HepG2 (cell line): ENCODE measurements at regions of chr6 and their contacts with region 1.

Region 1: DNA sequence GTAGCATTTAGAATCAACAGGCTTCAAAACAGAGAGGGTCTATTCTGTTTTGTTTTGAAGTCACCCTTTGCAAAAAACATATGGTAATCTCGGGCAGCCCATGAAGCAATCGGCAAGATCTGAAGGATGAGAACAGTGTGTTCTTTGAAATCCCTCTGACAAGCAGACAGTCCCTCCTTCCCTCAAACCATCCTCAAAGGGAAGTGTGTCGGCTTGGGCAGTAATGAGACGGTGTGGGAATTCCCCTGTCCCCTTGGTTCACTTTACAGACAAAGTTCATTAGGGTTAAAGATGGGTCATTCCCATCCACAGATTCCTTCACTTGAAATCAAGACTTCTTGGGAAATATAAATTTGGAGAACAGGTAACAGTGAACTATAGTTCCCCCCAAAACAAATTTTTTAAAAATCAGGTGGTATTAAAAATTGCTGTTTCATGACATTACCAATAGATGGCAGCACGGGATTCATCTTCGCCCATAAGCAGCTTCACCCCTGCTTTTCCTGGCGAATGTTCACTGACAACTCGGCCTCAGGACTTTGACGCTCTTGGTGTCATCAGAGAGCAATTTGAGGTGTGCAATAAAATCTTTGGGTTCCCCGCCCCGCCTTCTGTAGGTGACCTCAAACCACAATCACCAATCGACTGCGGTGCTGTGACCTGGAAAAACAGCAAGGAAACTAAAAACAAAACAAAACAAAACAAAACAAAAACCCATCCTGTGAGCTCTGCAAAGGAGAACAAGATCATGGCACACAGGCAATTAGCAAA is 159.3 kb upstream of the TNFAIP3 start:
- DNase-seq: peak; percentile 99
- ATAC-seq: peak; percentile 87
- H3K4me3 ChIP-seq: no peak overlapping the region
- H3K27ac ChIP-seq: peak overlapping the region; percentile 62
- H3K4me1 ChIP-seq: peaks cover 80% of the 10 kb centered on the region
- H3K27me3 ChIP-seq: no peaks in the 10 kb centered on the region
- CTCF ChIP-seq: peak; percentile 91
- EP300 ChIP-seq: peak; percentile 89 to 97; a peak in 3 of 4 replicates
- POLR2A ChIP-seq: no peak
- RAD21 ChIP-seq: peak; percentile 98

Region 2: GRCh38 chr6:137351890-137352289 is 355.9 kb before region 1 on chr6:
- CTCF ChIA-PET with region 1: no interaction called
- POLR2A ChIA-PET with region 1: no interaction called
- in situ Hi-C with region 1: no loop called
- intact Hi-C with region 1: loop called (anchors 10 kb)
- DNase-seq: peak; percentile 86
- ATAC-seq: no peak
- H3K4me3 ChIP-seq: no peak overlapping the region
- H3K27ac ChIP-seq: peak overlapping the region; percentile 99
- H3K4me1 ChIP-seq: peaks cover 82% of the 10 kb centered on the region
- H3K27me3 ChIP-seq: no peaks in the 10 kb centered on the region
- CTCF ChIP-seq: no peak
- EP300 ChIP-seq: peak in 1 of 2 experiments; percentile 76; a peak in 2 of 4 replicates
- POLR2A ChIP-seq: no peak
- RAD21 ChIP-seq: no peak

Region 3: DNA sequence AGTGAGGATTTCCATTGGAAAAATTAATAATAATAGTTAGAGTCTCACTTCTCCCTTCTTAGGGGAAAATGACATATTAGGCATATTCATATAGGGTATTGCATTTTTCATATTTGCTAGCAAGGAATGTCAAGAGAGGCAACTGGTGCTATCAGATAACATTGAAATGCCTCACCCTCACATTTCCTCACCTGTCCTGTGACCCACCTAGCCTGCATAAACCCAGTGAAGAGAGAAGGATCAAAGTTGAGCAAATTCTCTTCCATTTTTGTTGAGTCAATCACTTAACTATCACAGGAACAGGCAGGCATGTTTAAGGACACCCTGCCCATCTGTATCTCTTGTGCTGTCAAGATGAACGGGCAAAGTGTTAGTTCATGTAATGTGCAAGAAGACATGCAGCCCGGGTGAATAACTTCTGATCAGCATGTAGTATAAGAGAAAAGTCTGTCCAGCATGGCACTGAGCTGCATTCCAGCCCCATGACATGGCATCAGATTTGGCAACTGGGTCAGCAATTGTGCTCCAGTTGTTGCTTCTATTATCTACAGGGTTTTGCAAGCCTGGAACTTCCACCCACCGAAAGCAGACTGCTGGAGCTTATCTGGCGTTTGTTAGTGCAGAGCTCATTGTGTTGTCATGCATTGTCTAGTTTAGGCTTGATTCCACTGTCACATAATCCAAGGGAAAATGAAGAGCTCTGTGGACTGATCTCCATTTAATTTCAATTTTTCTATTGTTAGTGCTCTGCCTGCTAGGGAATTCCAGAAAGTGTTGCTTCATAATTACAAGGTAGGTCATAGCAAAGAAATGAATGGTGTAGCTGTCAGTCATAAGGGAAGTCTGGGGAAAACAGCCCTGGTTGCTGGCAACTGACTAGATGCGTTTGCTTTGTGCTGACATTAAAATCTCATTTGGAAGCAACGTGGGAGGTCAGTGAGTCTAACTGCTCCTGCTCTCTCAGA is 20.9 kb after region 1 on chr6:
- CTCF ChIA-PET with region 1: interaction called, 9 read pairs
- POLR2A ChIA-PET with region 1: interaction called, 16 read pairs
- in situ Hi-C with region 1: no loop called
- intact Hi-C with region 1: loop called (anchors 1 kb)
- DNase-seq: peak; percentile 92
- ATAC-seq: peak; percentile 43
- H3K4me3 ChIP-seq: no peak overlapping the region
- H3K27ac ChIP-seq: peak overlapping the region; percentile 89
- H3K4me1 ChIP-seq: peaks cover 99% of the 10 kb centered on the region
- H3K27me3 ChIP-seq: no peaks in the 10 kb centered on the region
- CTCF ChIP-seq: no peak
- EP300 ChIP-seq: peak in 1 of 2 experiments; percentile 58; a peak in 1 of 4 replicates
- POLR2A ChIP-seq: no peak
- RAD21 ChIP-seq: no peak

Region 4: GRCh38 chr6:137811121-137811915 is 103.5 kb after region 1 on chr6:
- CTCF ChIA-PET with region 1: interaction called, 3 read pairs
- POLR2A ChIA-PET with region 1: interaction called, 3 read pairs
- in situ Hi-C with region 1: loop called (anchors 5 kb)
- intact Hi-C with region 1: no loop called
- DNase-seq: peak; percentile 90
- ATAC-seq: peak; percentile 91
- H3K4me3 ChIP-seq: no peak overlapping the region; a peak in 1 of 6 replicates
- H3K27ac ChIP-seq: peak overlapping the region; percentile 65
- H3K4me1 ChIP-seq: peaks cover 66% of the 10 kb centered on the region
- H3K27me3 ChIP-seq: no peaks in the 10 kb centered on the region
- CTCF ChIP-seq: peak; percentile 10; the same call in 1 of the 2 replicates
- EP300 ChIP-seq: peak in 1 of 2 experiments; percentile 58; a peak in 1 of 4 replicates
- POLR2A ChIP-seq: peak; percentile 37 to 46; a peak in 1 of 4 replicates
- RAD21 ChIP-seq: 0 out of 2 replicates have a peak, but pooled peaks have one; percentile 32

Region 5: DNA sequence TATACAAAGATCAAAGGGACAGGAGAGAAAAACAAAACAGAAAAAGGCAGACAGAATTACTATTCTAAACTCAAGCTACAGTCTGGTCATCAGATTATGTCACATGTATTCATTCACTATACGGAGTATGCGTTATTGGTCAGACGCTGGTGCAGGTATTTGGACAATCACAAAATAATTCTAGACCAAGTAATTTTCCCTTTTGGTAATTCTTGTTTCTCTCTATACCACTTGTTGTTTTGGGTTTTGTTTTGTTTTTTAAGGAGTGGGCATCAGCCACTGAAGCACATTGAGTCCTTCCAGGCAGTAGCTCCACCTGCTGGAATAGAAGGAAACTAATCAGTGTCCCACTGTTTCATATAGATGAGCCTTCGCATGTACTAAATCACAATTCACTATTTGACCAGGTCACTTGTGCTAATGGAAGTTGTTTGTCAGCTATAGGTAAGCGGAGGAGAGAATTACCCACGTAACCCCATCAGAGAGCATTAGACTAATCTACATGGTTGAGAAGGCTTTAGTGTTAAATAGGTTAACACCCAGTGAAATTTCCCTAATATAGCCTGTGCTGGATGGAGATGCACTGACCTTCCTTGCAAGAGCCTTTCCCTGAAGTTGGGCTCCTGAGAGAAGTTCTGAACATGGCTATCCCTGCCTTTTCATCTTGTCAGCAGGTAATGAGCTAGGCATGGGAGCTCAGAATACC is 237.2 kb after region 1 on chr6:
- CTCF ChIA-PET with region 1: interaction called, 71 read pairs
- POLR2A ChIA-PET with region 1: interaction called, 3 read pairs
- in situ Hi-C with region 1: loop called (anchors 5 kb)
- intact Hi-C with region 1: loop called (anchors 1 kb)
- DNase-seq: peak; percentile 50
- ATAC-seq: peak; percentile 95
- H3K4me3 ChIP-seq: no peak overlapping the region
- H3K27ac ChIP-seq: no peak overlapping the region
- H3K4me1 ChIP-seq: peaks cover 5% of the 10 kb centered on the region
- H3K27me3 ChIP-seq: peaks cover 4 to 7% of the 10 kb centered on the region in 2 experiments; a peak in 2 of 5 replicates
- CTCF ChIP-seq: peak; percentile 90
- EP300 ChIP-seq: no peak
- POLR2A ChIP-seq: no peak
- RAD21 ChIP-seq: peak; percentile 84

Region 6: GRCh38 chr6:138109042-138109997 is 401.5 kb after region 1 on chr6:
- CTCF ChIA-PET with region 1: no interaction called
- POLR2A ChIA-PET with region 1: no interaction called
- in situ Hi-C with region 1: loop called (anchors 10 kb)
- intact Hi-C with region 1: loop called (anchors 2 kb)
- DNase-seq: peak; percentile 64
- ATAC-seq: no peak
- H3K4me3 ChIP-seq: no peak overlapping the region
- H3K27ac ChIP-seq: no peak overlapping the region
- H3K4me1 ChIP-seq: peaks cover 28% of the 10 kb centered on the region
- H3K27me3 ChIP-seq: no peaks in the 10 kb centered on the region; a peak in 1 of 5 replicates
- CTCF ChIP-seq: peak; percentile 90
- EP300 ChIP-seq: no peak
- POLR2A ChIP-seq: no peak
- RAD21 ChIP-seq: peak; percentile 88